Cardiac septum (tissue), 1 donor: ENCODE measurements at regions of chr2 and their contacts with region 1.

Region 1: DNA sequence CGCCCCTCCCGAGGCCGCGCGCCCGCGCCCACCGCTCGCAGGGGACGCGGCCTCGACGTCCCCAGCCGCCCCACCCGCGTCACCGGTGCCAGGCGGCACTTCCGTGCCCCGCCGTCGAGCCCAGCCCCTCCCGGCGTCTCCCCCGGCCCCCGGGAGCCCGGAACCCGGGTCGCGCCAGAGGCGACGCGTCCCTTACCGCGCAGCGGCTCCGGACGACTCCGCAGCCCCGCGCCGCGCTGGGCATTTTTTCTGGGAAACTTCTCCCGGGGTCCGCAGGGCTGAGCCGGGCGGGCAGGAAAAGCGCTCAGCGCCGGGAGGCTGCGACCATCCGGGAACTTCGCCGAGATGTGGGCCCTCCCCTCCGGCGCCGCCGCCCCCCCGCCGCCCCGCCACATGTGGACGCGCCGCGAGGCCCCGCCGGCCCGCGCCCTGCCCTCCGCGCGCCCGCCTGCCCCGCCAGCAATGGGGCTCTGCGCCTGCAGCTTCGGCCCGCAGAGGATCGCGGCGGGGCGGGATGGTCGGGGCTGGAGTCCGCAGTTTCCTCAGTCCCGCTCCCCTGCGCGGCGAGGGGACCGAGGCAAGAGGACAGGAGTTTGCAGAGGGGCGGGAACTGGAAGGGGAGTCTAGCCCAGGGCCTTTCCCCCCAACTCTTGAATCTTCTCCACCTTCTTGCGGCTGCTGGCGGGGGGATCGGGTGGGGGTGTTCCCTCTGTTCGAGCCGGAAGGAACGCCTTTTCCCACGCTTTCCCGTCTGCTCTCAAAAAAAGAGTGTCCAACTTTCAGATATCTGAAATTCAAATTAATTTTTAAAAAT is 81.5 kb downstream of the CHRNA1 start:
- DNase-seq: peak; percentile 87

Region 2: GRCh38 chr2:173783382-173783781 is 899.4 kb before region 1 on chr2:
- intact Hi-C with region 1: no loop called
- DNase-seq: no peak

Region 3: DNA sequence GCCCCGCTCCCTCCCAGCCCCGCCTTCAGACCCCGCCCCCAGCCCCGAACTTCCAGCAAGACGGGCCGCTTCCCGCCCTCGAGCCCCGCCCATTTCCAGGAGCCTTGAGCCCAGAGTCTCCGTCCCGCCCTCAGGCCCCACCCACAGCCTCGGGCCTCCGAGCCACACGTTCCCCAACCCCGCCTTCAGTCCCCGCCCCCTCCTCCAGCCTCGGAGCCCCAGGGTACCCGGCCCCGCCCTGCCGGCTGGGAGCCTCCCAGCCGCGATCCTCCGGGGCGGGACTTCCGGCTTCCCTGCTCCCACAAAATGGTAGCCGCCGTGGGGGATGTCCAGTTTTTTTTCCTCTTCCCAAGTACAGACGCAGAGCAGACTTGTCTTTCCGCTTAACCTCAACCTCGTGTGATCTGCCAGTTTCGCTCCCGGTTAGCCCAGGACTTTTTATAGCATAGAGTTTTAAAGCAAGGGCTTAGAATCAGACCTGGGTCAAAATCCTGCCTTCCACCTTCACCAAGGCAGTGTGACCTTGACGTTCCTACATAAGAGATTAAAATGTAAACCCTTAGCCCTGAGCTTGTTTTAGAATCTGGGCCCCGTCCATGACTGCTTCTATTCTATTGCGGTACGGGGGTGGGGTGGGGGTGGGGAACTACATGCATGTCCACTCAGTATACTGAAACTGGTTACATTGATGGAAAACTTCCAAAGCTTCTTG is 195.5 kb before region 1 on chr2:
- intact Hi-C with region 1: loop called (anchors 5 kb)
- DNase-seq: peak; percentile 100

Region 4: GRCh38 chr2:174593574-174594203 is 89.1 kb before region 1 on chr2:
- intact Hi-C with region 1: no loop called
- DNase-seq: no peak

Region 5: DNA sequence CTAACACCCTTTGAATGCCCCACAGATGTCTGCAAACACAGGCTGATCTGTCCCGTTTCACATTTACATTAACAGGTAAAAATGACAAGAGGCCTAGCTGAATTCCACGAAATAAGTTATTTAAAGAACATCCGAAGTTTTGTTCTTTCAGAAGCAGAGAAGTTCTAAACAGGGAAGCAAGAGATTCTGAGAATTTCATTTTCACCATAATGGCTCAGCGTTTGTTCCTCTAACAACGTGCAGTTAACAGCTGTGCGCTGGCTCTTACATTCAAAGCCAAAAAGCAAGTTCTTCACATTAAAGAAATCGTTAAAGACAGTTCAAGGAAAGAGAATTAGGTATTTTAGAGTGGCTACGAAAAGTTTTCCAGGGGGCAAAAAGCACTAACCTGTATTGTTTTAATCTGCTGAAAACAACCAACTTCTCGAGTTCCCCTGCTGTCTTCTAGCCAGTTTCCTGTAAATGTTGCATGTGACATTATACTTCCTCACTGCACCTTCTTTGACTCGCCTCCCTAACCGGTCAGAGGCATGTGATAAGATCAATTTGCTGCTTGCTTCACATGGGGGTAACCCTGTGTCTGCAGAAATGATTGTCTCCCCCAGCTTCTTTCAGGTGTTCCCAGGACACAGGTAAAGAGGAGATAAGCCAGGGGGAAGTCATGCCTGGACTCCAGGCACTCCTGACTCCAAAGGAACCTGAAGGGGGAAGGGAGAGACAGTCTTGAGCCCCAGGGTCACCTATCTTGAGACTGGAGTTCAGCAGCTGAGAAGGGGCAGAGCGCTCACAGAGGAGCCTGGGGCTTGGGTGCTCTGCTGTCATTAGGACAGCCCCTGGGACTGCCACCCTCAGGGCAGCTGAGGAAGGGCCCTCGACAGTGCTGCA is 48.4 kb before region 1 on chr2:
- intact Hi-C with region 1: loop called (anchors 5 kb)
- DNase-seq: no peak